CD4-positive, alpha-beta memory T cell (primary cell): ENCODE measurements at regions of chr1 and their contacts with region 1.

Region 1: GRCh38 chr1:31548907-31549808 is 27.2 kb upstream of the TINAGL1 start:
- DNase-seq: peak; percentile 79 to 86 (median 84)
- H3K4me3 ChIP-seq: no peak overlapping the region
- H3K4me3 Mint-ChIP-seq: peak overlapping the region; percentile 37 to 75 (median 54)
- H3K27ac ChIP-seq: no peak overlapping the region
- H3K27ac Mint-ChIP-seq: no peak overlapping the region
- H3K4me1 ChIP-seq: peaks cover 11% of the 10 kb centered on the region
- H3K4me1 Mint-ChIP-seq: peaks cover 6 to 9% (median 8%) of the 10 kb centered on the region in 4 donors
- H3K27me3 ChIP-seq: no peaks in the 10 kb centered on the region
- H3K27me3 Mint-ChIP-seq: peaks cover 2 to 4% of the 10 kb centered on the region in 2 donors

Region 2: GRCh38 chr1:31296486-31297276 is 252.5 kb before region 1 on chr1 and contains the starts of genes SNRNP40 and ZCCHC17:
- CTCF ChIA-PET with region 1: no interaction called
- POLR2A ChIA-PET with region 1: no interaction called
- intact Hi-C with region 1: no loop called
- DNase-seq: peak; percentile 96 to 99 (median 98)
- H3K4me3 ChIP-seq: peak within 1 kb of the TSS; percentile 89 to 98
- H3K4me3 Mint-ChIP-seq: no peak within 1 kb of the TSS
- H3K27ac ChIP-seq: peak within 1 kb of the TSS; percentile 85
- H3K27ac Mint-ChIP-seq: peak within 1 kb of the TSS in 1 of 7 donors; percentile 69
- H3K4me1 ChIP-seq: peaks cover 38% of the 10 kb centered on the region
- H3K4me1 Mint-ChIP-seq: peaks cover 25 to 27% (median 26%) of the 10 kb centered on the region in 4 donors
- H3K27me3 ChIP-seq: no peaks in the 10 kb centered on the region
- H3K27me3 Mint-ChIP-seq: no peaks in the 10 kb centered on the region
- total RNA-seq, gene SNRNP40: 58.7 to 67.0 TPM
- total RNA-seq, gene ZCCHC17: 20.2 to 21.8 TPM

Region 3: DNA sequence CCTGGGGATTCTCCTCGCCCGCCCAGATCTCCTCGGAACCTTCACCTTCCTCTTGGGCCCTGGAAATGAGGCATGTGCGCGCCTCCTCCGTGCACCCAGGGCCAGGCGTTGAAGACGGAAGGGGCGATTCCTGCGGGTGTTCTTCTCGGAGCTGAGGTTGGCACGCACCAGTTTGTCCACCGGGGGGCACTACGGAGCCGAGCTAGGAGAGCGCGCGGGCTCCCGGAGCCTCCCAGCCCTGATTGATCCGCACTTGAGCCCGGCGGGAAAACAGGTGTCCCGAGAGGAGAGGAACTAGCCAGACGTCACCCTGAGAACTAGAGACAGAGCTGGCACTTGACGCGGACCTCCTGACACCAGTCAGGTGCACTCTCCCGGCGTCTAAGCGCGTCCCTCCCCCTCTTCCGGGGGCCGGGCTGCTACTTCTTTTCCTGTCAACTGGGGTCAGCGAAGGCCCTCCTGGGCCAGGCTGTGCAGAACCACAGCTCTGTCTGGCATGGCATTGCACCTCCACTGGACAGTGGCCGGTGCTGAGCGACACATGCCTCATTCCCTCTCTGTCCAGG is 154.4 kb before region 1 on chr1:
- CTCF ChIA-PET with region 1: interaction called, 20 read pairs
- POLR2A ChIA-PET with region 1: no interaction called
- intact Hi-C with region 1: no loop called
- DNase-seq: peak; percentile 63 to 69 (median 65)
- H3K4me3 ChIP-seq: peak overlapping the region; percentile 47 to 62
- H3K4me3 Mint-ChIP-seq: peak overlapping the region; percentile 81 to 90 (median 85)
- H3K27ac ChIP-seq: no peak overlapping the region
- H3K27ac Mint-ChIP-seq: peak overlapping the region in 5 of 7 donors; percentile 22 to 64 (median 50)
- H3K4me1 ChIP-seq: peaks cover 10% of the 10 kb centered on the region
- H3K4me1 Mint-ChIP-seq: peaks cover 4 to 15% (median 10%) of the 10 kb centered on the region in 4 donors
- H3K27me3 ChIP-seq: no peaks in the 10 kb centered on the region
- H3K27me3 Mint-ChIP-seq: peaks cover 0 to 7% of the 10 kb centered on the region in 2 donors

Region 4: DNA sequence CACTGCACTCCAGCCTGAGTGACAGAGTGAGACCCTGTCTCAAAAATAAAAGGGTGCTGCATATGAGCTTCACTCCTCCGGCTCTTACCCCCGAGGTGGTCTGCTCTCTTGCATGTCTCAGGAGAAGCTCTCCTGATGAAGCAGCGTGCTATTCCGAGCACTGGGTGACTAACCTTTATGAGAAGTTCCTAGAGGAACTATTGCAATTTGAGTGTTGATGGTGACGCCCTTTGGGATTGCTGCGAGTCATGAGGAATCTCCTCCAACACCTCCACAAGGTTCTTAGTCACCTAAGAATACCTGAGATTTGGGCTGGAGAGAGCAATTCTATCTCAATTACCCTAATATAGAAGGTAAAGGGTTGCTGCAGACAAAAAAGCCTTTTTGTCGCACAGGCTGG is 13.6 kb before region 1 on chr1:
- CTCF ChIA-PET with region 1: interaction called, 24 read pairs
- POLR2A ChIA-PET with region 1: no interaction called
- intact Hi-C with region 1: no loop called
- DNase-seq: no peak
- H3K4me3 ChIP-seq: no peak overlapping the region
- H3K4me3 Mint-ChIP-seq: peak overlapping the region in 4 of 8 donors; percentile 51 to 65 (median 60)
- H3K27ac ChIP-seq: no peak overlapping the region
- H3K27ac Mint-ChIP-seq: no peak overlapping the region
- H3K4me1 ChIP-seq: peaks cover 4% of the 10 kb centered on the region
- H3K4me1 Mint-ChIP-seq: peaks cover 4 to 11% (median 9%) of the 10 kb centered on the region in 4 donors
- H3K27me3 ChIP-seq: no peaks in the 10 kb centered on the region
- H3K27me3 Mint-ChIP-seq: peaks cover 18 to 25% of the 10 kb centered on the region in 2 donors

Region 5: GRCh38 chr1:32020339-32020738 is 471.2 kb after region 1 on chr1:
- CTCF ChIA-PET with region 1: no interaction called
- POLR2A ChIA-PET with region 1: no interaction called
- intact Hi-C with region 1: no loop called
- DNase-seq: no peak
- H3K4me3 ChIP-seq: no peak overlapping the region
- H3K4me3 Mint-ChIP-seq: peak overlapping the region in 7 of 8 donors; percentile 1 to 72 (median 60)
- H3K27ac ChIP-seq: no peak overlapping the region
- H3K27ac Mint-ChIP-seq: peak overlapping the region; percentile 14 to 84 (median 53)
- H3K4me1 ChIP-seq: peaks cover 87% of the 10 kb centered on the region
- H3K4me1 Mint-ChIP-seq: peaks cover 33 to 78% (median 47%) of the 10 kb centered on the region in 4 donors
- H3K27me3 ChIP-seq: no peaks in the 10 kb centered on the region
- H3K27me3 Mint-ChIP-seq: no peaks in the 10 kb centered on the region